ENCODE measurements at regions of chr7 and their contacts with region 1.

Region 1: GRCh38 chr7:123534383-123535260 is at the start of gene IQUB:
- DNase-seq: peak; percentile 91 to 100 (median 98)

Region 2: DNA sequence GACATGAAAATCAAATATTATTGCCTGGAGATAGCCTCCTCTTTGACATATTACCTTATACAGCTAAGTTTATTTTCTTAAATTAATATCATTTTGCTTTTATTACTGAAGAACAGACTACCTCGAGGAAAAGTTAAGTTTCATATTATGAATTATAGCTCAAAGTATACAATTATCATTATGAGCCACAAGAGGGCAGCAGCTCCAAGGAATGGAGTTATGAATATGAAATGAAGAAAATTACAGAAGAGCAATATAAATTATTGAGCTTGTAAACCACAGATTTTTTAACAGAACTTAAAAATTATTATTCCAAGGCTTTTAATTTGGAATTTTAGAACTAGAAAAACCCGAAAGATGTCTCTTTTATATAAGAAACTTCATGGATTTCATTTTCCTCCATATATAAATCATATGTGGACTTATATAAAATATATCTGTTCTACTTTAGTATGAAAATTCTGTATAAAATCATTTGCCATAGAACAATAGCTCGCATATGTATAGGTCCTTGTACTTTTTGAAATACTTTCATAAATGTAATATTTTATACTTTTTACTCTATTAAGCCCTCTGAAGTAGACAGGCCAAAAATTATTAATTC is 40.3 kb before region 1 on chr7:
- intact Hi-C with region 1: loop called (anchors 2 kb)
- DNase-seq: peak in 1 of 10 donors; percentile 9

Region 3: GRCh38 chr7:123557398-123558288 is 23.0 kb after region 1 on chr7 and contains the start of gene NDUFA5:
- intact Hi-C with region 1: loop called (anchors 2 kb)
- DNase-seq: peak; percentile 95 to 99 (median 97)

Region 4: DNA sequence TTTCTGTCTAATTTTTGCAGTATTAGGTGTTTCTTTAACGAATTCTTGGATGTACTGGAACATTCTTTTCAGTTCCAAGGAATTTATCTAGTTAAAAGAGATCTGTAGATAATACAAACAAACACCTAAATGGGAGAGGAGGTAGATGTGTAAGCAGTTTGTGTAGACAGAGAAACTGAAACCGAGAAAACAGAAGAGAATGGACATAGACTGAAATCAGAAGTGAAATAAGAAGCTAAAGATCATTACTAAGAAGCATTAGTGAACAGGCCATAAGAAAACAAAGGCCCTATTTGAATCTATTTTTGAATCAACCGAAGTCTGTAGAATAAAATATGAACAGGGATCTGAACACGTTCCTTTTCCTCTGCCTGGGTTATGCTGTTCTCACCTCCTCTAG is 524.8 kb after region 1 on chr7:
- intact Hi-C with region 1: no loop called
- DNase-seq: no peak